ENCODE measurements at regions of chr19 and their contacts with region 1.

Region 1: GRCh38 chr19:14136509-14137281 is at the start of gene ASF1B:
- DNase-seq: peak; percentile 94 to 99 (median 98)
- ATAC-seq: peak; percentile 82 to 84
- H3K4me3 Mint-ChIP-seq: peak within 1 kb of the TSS; percentile 77 to 96 (median 91)
- H3K27ac Mint-ChIP-seq: peak within 1 kb of the TSS; percentile 86 to 98 (median 94)
- H3K4me1 Mint-ChIP-seq: peaks cover 10 to 35% (median 31%) of the 10 kb centered on the region in 4 donors
- H3K27me3 Mint-ChIP-seq: no peaks in the 10 kb centered on the region
- polyA plus RNA-seq, gene ASF1B: 2.3 to 4.2 (median 3.7) TPM

Region 2: DNA sequence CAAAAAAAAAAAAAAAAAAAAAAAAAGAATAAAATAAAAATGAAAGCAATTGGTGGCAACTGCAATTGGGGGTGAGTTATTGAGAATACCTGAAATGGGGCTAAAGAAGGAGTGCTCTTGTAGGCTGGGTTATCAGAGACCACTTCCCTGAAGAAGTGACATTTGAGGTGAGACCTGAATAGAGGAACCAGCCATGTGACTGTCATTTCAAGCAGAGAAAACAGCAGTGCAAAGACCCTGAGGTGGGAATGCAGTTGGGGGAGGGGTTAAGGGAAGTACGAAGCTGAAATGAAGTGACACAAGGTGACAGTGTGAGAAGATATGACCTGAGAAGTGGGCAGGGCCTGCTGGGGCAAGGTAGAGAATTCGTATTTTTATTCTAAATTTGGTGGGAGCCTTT is 70.6 kb before region 1 on chr19:
- POLR2A ChIA-PET with region 1: no interaction called
- DNase-seq: no peak
- ATAC-seq: peak; percentile 16 to 35
- H3K4me3 Mint-ChIP-seq: no peak overlapping the region
- H3K27ac Mint-ChIP-seq: peak overlapping the region in 1 of 10 donors; percentile 36
- H3K4me1 Mint-ChIP-seq: peaks cover 0 to 2% (median 0%) of the 10 kb centered on the region in 4 donors
- H3K27me3 Mint-ChIP-seq: peaks cover 2 to 6% (median 5%) of the 10 kb centered on the region in 5 donors

Region 3: DNA sequence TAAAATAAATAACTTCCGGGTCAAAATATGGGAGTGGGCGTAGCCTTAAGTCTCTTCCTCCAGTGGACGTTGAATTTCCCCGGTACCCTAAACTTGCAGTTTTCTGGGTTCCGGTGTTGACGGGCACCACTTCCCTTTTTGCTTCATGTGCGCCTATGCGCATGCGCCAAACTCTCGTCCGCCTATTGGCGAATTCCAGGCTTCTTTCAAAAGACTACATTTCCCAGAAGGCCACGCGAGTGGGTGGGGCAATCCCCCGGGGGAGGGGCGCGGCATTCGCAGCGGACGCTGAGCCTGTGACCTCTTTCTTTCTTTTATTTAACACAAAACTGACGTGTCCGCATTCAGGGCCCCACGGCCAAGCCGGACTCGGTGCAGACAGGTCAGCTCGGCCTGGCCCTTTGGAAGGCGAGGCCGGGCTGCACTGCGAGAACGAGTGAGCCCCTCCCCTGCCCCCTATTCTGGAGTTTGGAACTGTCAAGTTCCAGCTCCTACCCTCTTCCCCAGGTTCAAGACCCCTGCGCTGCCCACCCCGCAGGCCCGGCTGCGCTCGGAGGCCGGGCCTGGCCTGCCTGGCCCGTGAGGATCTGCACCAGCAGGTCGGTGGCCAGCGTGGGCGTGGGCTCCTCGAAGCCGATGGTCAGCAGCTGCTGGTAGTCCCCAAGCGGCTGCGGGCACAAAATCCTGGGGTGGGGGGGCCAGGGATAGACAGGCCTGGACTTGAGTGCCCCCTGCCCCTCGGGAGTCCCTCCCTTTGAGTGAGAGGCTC is 55.2 kb before region 1 on chr19:
- POLR2A ChIA-PET with region 1: interaction called, 16 read pairs
- DNase-seq: peak; percentile 96 to 100 (median 99)
- ATAC-seq: peak; percentile 93 to 96
- H3K4me3 Mint-ChIP-seq: peak overlapping the region; percentile 84 to 98 (median 95)
- H3K27ac Mint-ChIP-seq: peak overlapping the region; percentile 74 to 99 (median 97)
- H3K4me1 Mint-ChIP-seq: peaks cover 8 to 29% (median 19%) of the 10 kb centered on the region in 4 donors
- H3K27me3 Mint-ChIP-seq: no peaks in the 10 kb centered on the region

Region 4: GRCh38 chr19:14103310-14103709 is 33.4 kb before region 1 on chr19:
- POLR2A ChIA-PET with region 1: no interaction called
- DNase-seq: no peak
- ATAC-seq: no peak
- H3K4me3 Mint-ChIP-seq: no peak overlapping the region
- H3K27ac Mint-ChIP-seq: no peak overlapping the region
- H3K4me1 Mint-ChIP-seq: no peaks in the 10 kb centered on the region
- H3K27me3 Mint-ChIP-seq: no peaks in the 10 kb centered on the region

Region 5: GRCh38 chr19:14117668-14118164 is 19.0 kb before region 1 on chr19 and contains the start of gene PRKACA:
- POLR2A ChIA-PET with region 1: interaction called, 46 read pairs
- DNase-seq: peak; percentile 94 to 99 (median 98)
- ATAC-seq: peak; percentile 90 to 94
- H3K4me3 Mint-ChIP-seq: peak within 1 kb of the TSS; percentile 86 to 99 (median 96)
- H3K27ac Mint-ChIP-seq: peak within 1 kb of the TSS; percentile 89 to 99 (median 98)
- H3K4me1 Mint-ChIP-seq: peaks cover 25 to 50% (median 48%) of the 10 kb centered on the region in 4 donors
- H3K27me3 Mint-ChIP-seq: no peaks in the 10 kb centered on the region
- polyA plus RNA-seq, gene PRKACA: 1.1 to 1.8 (median 1.3) TPM

Region 6: DNA sequence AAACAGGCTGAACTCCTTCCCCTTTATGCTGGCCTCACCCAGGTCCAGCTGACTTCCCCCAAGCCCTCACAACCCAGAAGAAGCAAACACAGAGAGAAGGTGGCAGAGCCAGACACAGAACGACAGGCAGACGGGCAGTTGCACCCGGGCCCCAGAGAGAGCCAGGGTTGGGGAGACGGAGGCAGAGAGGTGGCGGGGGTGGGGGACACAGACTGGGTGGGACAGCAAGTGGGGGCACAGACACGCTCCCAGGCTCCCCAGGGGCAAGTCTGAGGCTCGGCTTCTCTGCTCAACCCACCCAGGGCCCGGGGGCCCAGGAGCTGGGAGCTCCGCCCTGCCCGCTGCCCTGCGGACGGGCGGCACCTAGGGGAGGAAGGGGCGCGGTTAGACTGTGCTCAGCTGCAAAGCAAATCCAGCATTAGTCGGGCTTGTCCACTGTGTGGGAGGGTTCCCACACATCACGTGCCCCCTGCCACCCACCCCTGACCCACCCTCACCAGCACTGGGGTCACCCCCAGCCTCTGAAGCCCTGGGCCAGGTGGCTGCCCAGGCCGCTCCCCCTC is 31.0 kb after region 1 on chr19:
- POLR2A ChIA-PET with region 1: interaction called, 22 read pairs
- DNase-seq: peak in 6 of 10 donors; percentile 17 to 42 (median 30)
- ATAC-seq: peak; percentile 77 to 83
- H3K4me3 Mint-ChIP-seq: peak overlapping the region; percentile 76 to 93 (median 89)
- H3K27ac Mint-ChIP-seq: peak overlapping the region; percentile 74 to 97 (median 92)
- H3K4me1 Mint-ChIP-seq: peaks cover 20 to 33% (median 25%) of the 10 kb centered on the region in 4 donors
- H3K27me3 Mint-ChIP-seq: no peaks in the 10 kb centered on the region

Region 7: DNA sequence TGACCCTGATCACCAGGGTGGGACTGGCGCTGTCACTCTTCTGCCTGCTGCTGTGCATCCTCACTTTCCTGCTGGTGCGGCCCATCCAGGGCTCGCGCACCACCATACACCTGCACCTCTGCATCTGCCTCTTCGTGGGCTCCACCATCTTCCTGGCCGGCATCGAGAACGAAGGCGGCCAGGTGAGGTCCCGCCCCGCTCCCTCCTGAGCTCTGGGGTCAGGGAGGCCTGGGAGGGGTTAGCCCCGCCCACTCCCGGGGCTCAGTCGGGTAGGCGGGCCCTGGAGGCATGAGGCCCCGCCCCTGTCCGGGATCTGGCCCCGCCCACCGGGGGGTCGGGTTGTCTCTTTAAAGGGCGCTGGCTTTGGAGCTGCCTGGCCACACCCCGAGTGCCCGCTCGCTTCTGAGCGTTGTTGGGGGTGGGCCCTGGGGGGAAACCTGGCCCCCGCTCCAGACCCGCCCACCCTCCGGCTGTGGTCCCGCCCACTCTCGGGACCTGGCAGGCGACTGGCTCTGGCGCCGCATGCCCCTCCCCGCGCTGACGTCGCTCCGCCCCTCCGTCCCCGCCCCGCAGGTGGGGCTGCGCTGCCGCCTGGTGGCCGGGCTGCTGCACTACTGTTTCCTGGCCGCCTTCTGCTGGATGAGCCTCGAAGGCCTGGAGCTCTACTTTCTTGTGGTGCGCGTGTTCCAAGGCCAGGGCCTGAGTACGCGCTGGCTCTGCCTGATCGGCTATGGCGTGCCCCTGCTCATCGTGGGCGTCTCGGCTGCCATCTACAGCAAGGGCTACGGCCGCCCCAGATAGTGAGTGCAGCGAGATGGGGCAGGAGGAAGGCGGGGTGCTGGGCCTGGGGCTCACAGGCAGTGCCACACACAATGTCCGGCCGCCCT is 269.3 kb after region 1 on chr19:
- POLR2A ChIA-PET with region 1: interaction called, 10 read pairs
- DNase-seq: peak; percentile 83 to 94 (median 91)
- ATAC-seq: peak; percentile 57 to 79
- H3K4me3 Mint-ChIP-seq: peak overlapping the region in 3 of 10 donors; percentile 29 to 43 (median 30)
- H3K27ac Mint-ChIP-seq: peak overlapping the region; percentile 57 to 92 (median 78)
- H3K4me1 Mint-ChIP-seq: peaks cover 12 to 37% (median 28%) of the 10 kb centered on the region in 4 donors
- H3K27me3 Mint-ChIP-seq: no peaks in the 10 kb centered on the region

Measured in naive thymus-derived CD8-positive, alpha-beta T cell (primary cell).